ENCODE measurements at regions of chr19 and their contacts with region 1.

Region 1: DNA sequence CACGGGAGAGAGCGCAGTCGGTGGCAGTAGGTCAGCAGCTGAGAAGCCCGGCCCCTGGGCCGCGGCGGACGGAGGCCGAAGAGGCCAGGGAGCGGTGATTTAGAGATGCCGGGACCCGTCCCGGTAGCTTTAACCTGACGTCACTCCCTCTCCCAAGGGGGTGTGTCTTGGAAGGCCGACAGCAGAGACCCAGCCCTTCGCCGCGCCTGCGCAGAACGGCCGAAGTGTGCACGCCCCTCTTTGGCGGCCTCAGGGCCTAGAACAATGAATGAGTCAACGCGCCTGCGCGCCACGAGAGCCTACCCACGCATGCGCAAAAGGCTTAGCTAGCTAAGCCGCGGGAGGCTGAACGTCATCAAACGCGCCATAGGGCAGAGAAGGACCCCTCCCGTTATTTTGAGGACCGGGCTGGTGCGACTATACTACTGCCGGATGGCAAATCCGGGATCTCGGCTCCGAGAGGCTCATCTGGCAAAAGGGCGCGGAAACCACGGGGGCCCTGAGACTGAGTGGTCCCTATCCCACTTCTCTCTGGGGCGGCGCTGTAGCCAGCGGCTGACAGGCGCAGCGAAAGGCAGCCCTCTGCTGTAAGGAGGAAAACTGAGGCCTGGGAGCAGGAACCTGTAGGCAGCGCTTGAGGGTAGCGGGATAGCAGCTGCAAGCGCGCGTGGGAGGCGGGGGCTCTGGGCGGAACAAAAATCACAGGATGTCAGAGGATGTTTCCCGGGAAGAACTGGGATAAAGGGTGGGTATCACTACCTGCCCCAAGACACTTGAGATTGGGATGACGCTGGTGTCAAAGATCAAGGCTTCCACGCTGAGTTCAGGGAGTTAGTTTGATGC is at the starts of genes IRGQ and ZNF576:
- DNase-seq: peak; percentile 98 to 100 (median 99)
- ATAC-seq: peak; percentile 88
- H3K4me3 ChIP-seq: peak within 1 kb of the TSS; percentile 81
- H3K4me3 Mint-ChIP-seq: peak within 1 kb of the TSS; percentile 84 to 98 (median 95)
- H3K27ac ChIP-seq: peak within 1 kb of the TSS; percentile 95
- H3K27ac Mint-ChIP-seq: peak within 1 kb of the TSS; percentile 98 to 100 (median 100)
- H3K4me1 ChIP-seq: peaks cover 16 to 28% of the 10 kb centered on the region in 2 donors
- H3K4me1 Mint-ChIP-seq: peaks cover 27 to 47% (median 37%) of the 10 kb centered on the region in 7 donors
- H3K27me3 ChIP-seq: no peaks in the 10 kb centered on the region
- H3K27me3 Mint-ChIP-seq: peaks cover 0 to 4% (median 0%) of the 10 kb centered on the region in 5 donors
- total RNA-seq, gene IRGQ: 13.5 to 43.8 (median 18.9) TPM
- total RNA-seq, gene ZNF576: 9.4 to 20.6 (median 19.5) TPM

Region 2: DNA sequence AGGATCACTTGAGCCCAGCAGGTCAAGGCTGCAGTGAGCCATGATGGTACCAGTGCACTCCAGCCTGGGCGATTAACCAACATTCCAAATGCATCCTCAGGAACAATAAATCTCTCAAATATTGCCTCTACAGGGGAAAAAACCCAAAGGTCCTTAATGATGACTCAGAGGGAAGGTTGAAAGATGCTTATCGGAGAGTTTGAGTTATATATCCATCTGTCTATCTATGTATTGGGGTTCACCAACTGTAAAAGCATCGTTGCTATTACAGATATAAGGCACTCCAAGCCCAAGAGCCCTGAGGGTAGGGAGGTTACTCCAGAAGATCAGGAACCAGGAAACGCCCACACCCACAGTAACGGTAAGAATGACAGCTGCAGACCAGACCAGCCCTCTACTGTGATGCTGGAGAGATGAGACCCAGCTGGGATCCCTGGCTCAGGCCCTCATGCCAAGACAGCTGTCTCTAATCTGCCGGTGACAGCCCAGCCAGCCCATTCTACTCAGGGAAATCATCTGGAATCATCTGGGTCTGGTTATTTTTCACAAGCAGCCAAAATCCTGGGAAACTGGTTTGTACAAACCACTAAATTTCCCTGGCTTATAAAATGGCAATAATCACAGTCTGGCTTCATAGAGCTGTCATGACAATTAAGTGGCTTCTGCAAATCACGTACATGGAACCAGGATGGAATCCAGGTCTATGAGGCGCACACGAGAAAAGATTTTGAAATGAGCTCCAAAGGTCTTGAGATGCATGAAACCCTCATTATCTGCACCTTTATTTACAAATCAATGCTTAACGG is 157.7 kb before region 1 on chr19:
- CTCF ChIA-PET with region 1: interaction called, 7 read pairs
- POLR2A ChIA-PET with region 1: interaction called, 8 read pairs
- intact Hi-C with region 1: loop called in 1 of 2 experiments (anchors 1 kb)
- DNase-seq: peak in 2 of 9 donors; percentile 19 to 21
- ATAC-seq: peak; percentile 4
- H3K4me3 ChIP-seq: peak overlapping the region; percentile 33
- H3K4me3 Mint-ChIP-seq: peak overlapping the region; percentile 49 to 77 (median 64)
- H3K27ac ChIP-seq: peak overlapping the region; percentile 72
- H3K27ac Mint-ChIP-seq: peak overlapping the region; percentile 81 to 99 (median 93)
- H3K4me1 ChIP-seq: peaks cover 23 to 30% of the 10 kb centered on the region in 2 donors
- H3K4me1 Mint-ChIP-seq: peaks cover 29 to 75% (median 62%) of the 10 kb centered on the region in 7 donors
- H3K27me3 ChIP-seq: no peaks in the 10 kb centered on the region
- H3K27me3 Mint-ChIP-seq: peaks cover 0 to 2% (median 0%) of the 10 kb centered on the region in 5 donors

Region 3: GRCh38 chr19:43474986-43475705 is 121.1 kb before region 1 on chr19:
- CTCF ChIA-PET with region 1: no interaction called
- POLR2A ChIA-PET with region 1: no interaction called
- intact Hi-C with region 1: loop called in 1 of 2 experiments (anchors 1 kb)
- DNase-seq: peak; percentile 95 to 99 (median 98)
- ATAC-seq: peak; percentile 93
- H3K4me3 ChIP-seq: peak overlapping the region; percentile 77
- H3K4me3 Mint-ChIP-seq: peak overlapping the region; percentile 75 to 93 (median 86)
- H3K27ac ChIP-seq: peak overlapping the region; percentile 92
- H3K27ac Mint-ChIP-seq: peak overlapping the region; percentile 93 to 100 (median 98)
- H3K4me1 ChIP-seq: peaks cover 9 to 30% of the 10 kb centered on the region in 2 donors
- H3K4me1 Mint-ChIP-seq: peaks cover 13 to 55% (median 41%) of the 10 kb centered on the region in 7 donors
- H3K27me3 ChIP-seq: no peaks in the 10 kb centered on the region
- H3K27me3 Mint-ChIP-seq: no peaks in the 10 kb centered on the region

Region 4: DNA sequence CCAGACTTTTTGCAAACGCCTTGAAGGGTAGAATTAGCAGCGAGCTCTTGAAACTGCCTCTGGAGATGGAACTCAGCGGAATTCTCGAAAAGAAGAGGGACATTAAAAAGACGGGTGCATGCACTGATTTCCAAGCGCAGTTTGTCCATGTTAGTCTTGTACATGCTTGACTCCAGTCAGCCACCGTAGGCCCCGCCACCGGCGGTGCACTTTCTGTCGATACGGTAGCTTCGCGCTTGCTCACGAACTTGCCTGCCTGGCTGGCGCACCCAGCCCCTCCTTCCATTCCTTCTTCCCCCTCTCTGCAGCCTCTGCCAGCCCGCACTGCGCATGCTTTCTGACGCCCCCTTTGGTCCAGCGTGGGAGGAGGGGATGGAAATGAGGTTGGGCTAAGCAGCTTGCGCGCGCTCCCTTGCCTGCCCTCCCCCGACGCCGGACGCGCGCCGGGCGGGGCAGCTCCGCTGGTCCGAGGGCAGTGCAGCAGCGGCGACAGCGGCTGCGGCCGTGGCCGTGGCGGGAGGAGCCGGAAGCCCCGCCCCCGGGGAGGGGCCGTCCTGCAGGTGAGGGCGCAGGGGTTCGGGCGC is 63.2 kb before region 1 on chr19 and contains the start of gene ZNF575:
- CTCF ChIA-PET with region 1: interaction called, 12 read pairs
- POLR2A ChIA-PET with region 1: interaction called, 7 read pairs
- intact Hi-C with region 1: loop called (anchors 1 kb)
- DNase-seq: peak; percentile 61 to 91 (median 87)
- ATAC-seq: peak; percentile 64
- H3K4me3 ChIP-seq: peak within 1 kb of the TSS; percentile 98
- H3K4me3 Mint-ChIP-seq: peak within 1 kb of the TSS; percentile 88 to 98 (median 95)
- H3K27ac ChIP-seq: peak within 1 kb of the TSS; percentile 68
- H3K27ac Mint-ChIP-seq: peak within 1 kb of the TSS; percentile 90 to 98 (median 95)
- H3K4me1 ChIP-seq: peaks cover 12 to 14% of the 10 kb centered on the region in 2 donors
- H3K4me1 Mint-ChIP-seq: peaks cover 5 to 27% (median 18%) of the 10 kb centered on the region in 7 donors
- H3K27me3 ChIP-seq: no peaks in the 10 kb centered on the region
- H3K27me3 Mint-ChIP-seq: no peaks in the 10 kb centered on the region
- total RNA-seq, gene ZNF575: 4.5 to 10.7 (median 5.6) TPM

Region 5: DNA sequence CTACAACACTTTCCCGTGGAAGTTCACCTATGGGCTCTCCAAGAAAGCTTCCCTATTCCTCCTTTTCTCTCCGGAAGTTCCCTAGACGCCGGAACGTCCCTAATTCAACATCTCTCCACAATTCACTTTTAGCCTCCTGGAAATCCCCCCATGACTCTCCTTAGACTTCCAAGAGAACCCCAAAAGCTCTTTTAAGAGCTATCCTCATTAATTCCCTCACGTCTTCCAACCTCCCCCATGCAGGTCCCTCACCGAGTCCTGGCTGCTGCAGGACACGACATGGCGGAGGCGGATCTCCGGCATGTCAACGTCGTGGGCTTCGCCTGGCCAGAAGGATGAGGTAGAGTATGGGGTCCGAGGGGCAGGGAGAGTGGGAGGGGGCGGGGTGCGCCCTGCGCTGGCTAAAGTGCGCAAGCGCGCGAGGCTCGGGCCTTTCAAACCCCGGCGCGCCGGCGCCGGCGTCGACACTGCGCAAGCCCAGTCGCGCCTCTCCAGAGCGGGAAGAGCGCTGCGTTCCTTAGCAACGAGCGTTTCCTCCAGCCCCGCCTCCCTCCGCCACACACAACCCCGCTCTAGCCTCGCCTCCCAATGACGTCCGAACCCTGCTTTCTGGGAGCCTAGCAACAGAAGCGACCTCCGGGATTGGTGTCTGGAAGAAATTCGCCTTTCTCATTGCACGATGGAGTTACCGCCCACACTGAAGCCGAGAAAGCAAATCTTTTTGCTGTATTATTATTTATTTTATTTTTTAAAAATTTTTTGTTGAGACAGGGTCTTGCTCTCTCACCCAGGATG is 20.9 kb before region 1 on chr19 and contains the starts of genes PINLYP and XRCC1:
- CTCF ChIA-PET with region 1: interaction called, 36 read pairs
- POLR2A ChIA-PET with region 1: interaction called, 51 read pairs
- intact Hi-C with region 1: loop called (anchors 1 kb)
- DNase-seq: peak; percentile 85 to 99 (median 95)
- ATAC-seq: peak; percentile 99
- H3K4me3 ChIP-seq: peak within 1 kb of the TSS; percentile 77
- H3K4me3 Mint-ChIP-seq: peak within 1 kb of the TSS; percentile 92 to 98 (median 96)
- H3K27ac ChIP-seq: peak within 1 kb of the TSS; percentile 98
- H3K27ac Mint-ChIP-seq: peak within 1 kb of the TSS; percentile 93 to 99 (median 96)
- H3K4me1 ChIP-seq: peaks cover 12 to 14% of the 10 kb centered on the region in 2 donors
- H3K4me1 Mint-ChIP-seq: peaks cover 26 to 63% (median 51%) of the 10 kb centered on the region in 7 donors
- H3K27me3 ChIP-seq: no peaks in the 10 kb centered on the region
- H3K27me3 Mint-ChIP-seq: peaks cover 0 to 5% (median 0%) of the 10 kb centered on the region in 5 donors
- total RNA-seq, gene PINLYP: 0.27 to 5.8 (median 0.59) TPM
- total RNA-seq, gene XRCC1: 32.0 to 36.1 (median 35.4) TPM

Region 6: GRCh38 chr19:43668406-43669158 is 72.4 kb after region 1 on chr19:
- CTCF ChIA-PET with region 1: interaction called, 4 read pairs
- POLR2A ChIA-PET with region 1: interaction called, 7 read pairs
- intact Hi-C with region 1: loop called (anchors 1 kb)
- DNase-seq: peak; percentile 82 to 98 (median 95)
- ATAC-seq: peak; percentile 90
- H3K4me3 ChIP-seq: peak overlapping the region; percentile 88
- H3K4me3 Mint-ChIP-seq: peak overlapping the region; percentile 84 to 93 (median 90)
- H3K27ac ChIP-seq: peak overlapping the region; percentile 58
- H3K27ac Mint-ChIP-seq: peak overlapping the region; percentile 71 to 91 (median 86)
- H3K4me1 ChIP-seq: peaks cover 16 to 27% of the 10 kb centered on the region in 2 donors
- H3K4me1 Mint-ChIP-seq: peaks cover 37 to 55% (median 45%) of the 10 kb centered on the region in 7 donors
- H3K27me3 ChIP-seq: no peaks in the 10 kb centered on the region
- H3K27me3 Mint-ChIP-seq: peaks cover 0 to 8% (median 0%) of the 10 kb centered on the region in 5 donors

Region 7: DNA sequence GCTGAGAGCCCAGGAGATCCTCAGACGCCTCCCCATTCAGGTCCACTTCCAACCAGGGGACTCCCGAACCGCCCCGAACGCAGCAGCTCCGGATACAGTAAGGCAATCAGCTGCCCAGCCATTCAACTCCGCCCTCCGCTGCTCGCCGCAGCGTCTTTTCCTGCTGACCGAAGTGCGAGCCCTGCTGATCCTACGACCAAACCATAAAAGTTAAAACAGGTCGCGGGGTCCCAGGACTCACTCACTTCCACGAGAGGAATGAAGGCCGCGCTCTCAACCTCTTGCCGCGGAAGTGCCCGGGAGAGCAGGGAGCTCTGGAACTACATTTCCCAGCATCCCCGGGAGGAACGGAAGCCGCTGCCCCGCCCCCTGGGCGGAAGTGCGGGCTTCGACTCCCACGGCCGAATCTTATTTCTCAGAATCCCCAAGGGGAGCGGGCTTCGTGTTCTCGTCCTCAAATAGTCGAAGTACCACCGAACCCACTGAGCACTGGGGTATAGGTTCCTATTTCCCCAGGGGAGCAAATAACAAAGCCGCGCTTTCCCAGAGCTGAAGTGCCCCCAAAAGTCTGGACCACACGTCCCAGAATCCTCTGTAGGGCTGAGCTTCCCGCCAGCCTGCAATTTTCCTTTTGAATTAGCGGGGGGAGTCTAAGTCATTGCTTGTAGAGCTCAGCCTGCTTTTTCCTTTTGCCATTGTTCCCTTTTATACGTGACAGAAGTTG is 338.9 kb after region 1 on chr19 and contains the start of gene ZNF45:
- CTCF ChIA-PET with region 1: no interaction called
- POLR2A ChIA-PET with region 1: no interaction called
- intact Hi-C with region 1: loop called in 1 of 2 experiments (anchors 1 kb)
- DNase-seq: peak; percentile 65 to 89 (median 86)
- ATAC-seq: peak; percentile 98
- H3K4me3 ChIP-seq: peak within 1 kb of the TSS; percentile 84
- H3K4me3 Mint-ChIP-seq: peak within 1 kb of the TSS; percentile 93 to 98 (median 96)
- H3K27ac ChIP-seq: peak within 1 kb of the TSS; percentile 81
- H3K27ac Mint-ChIP-seq: peak within 1 kb of the TSS; percentile 81 to 96 (median 93)
- H3K4me1 ChIP-seq: peaks cover 16 to 17% of the 10 kb centered on the region in 2 donors
- H3K4me1 Mint-ChIP-seq: peaks cover 10 to 46% (median 32%) of the 10 kb centered on the region in 7 donors
- H3K27me3 ChIP-seq: no peaks in the 10 kb centered on the region
- H3K27me3 Mint-ChIP-seq: peaks cover 0 to 7% (median 0%) of the 10 kb centered on the region in 5 donors
- total RNA-seq, gene ZNF45: 8.4 to 28.5 (median 15.3) TPM

Measured in naive thymus-derived CD4-positive, alpha-beta T cell (primary cell).